ENCODE measurements at regions of chr2 and their contacts with region 1.

Region 1: DNA sequence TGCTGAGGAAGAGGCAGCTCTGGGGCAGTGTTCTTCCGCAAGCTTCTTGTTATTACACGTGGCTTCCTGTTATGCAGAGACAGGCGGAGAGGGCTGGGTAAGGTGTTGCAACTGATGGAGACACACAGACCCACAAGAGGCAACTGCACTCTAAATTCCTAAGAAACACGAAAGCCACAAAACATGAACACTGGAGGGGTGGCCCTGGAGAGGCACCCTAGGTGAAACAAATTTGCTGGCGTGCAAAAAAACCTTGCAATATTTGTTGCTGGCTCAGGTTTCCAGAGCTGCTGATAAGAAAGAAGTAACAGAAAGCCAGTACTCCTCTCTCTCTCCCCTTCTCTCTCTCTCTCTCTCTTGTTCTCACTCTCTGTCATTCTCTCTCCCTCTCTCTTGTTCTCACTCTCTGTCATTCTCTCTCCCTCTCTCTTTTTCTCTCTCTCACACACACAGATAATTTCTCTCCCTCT is 31.8 kb downstream of the ARHGAP25 start:
- DNase-seq: peak; percentile 77
- H3K4me3 Mint-ChIP-seq: peak overlapping the region; percentile 77
- H3K27ac Mint-ChIP-seq: peak overlapping the region; percentile 95
- H3K4me1 Mint-ChIP-seq: peaks cover 97% of the 10 kb centered on the region
- H3K27me3 Mint-ChIP-seq: no peaks in the 10 kb centered on the region

Region 2: DNA sequence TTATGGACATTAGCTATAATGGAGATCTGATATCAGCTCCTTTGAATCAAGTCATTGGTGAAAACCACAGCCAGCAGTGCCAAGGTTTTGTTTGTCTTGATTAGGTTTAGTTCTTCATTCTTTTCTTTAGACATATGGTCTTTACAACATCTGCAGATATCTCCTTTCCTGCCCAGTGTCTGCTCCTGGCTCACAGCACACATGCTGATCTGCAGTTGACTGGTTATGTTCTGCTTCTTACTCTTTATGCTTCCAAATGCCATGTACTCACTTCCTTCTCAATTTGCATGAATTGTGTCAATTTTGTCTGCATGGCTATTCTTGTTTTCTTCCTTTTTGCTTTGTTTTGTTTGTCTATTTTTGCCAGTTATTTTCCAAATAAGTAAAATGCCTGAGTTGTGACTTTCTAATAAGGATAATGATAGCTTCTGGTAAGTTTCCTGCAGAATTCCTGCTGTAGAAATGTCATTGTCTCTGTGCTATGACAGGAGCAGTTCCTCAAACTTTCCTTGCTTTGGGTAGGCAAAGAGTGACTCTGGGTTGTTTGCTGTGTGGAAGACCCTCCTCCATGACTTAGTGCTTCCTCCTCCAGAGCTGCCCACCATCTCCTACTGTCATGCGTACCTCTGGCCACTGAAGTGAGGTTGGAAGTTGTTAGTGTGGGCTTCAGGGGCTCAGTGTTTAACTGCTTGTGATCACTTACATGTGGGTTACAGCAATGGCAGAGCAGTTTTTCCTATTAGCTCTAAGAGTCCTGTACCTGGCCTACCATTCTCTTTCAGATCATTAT is 23.6 kb before region 1 on chr2:
- CTCF ChIA-PET with region 1: interaction called, 69 read pairs
- intact Hi-C with region 1: loop called (anchors 1 kb)
- DNase-seq: peak; percentile 45
- H3K4me3 Mint-ChIP-seq: no peak overlapping the region
- H3K27ac Mint-ChIP-seq: peak overlapping the region; percentile 91
- H3K4me1 Mint-ChIP-seq: peaks cover 93% of the 10 kb centered on the region
- H3K27me3 Mint-ChIP-seq: no peaks in the 10 kb centered on the region

Region 3: DNA sequence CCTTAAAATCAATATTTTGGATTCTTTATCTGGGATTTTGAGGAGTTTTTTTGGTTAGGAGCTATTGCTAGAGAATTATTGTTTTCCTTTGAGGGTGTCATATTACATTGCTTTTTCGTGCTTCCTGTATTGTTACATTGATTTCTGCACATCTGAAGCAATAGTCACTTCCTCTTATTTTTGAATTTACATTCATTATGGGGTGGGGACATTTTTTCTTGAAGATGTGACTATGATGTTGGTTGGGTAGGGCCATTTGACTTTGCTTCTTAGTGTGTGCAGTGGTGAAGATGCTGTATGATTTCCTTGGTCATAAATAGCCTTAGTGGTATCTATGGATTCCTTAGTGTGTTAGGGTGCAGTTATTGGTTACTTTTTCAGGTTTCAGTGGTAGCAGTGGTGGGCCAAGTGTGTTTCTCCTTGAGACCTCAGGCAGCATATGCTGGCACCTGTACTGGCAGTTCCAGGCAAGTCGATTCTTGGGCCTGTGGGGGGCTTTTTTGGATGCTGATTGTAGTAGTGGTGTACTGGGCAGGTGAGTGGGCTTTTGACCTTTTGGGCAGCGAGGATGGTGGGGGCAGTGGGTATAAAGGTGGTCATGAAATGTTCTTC is 30.0 kb after region 1 on chr2:
- CTCF ChIA-PET with region 1: interaction called, 3 read pairs
- intact Hi-C with region 1: loop called (anchors 1 kb)
- DNase-seq: peak; percentile 34
- H3K4me3 Mint-ChIP-seq: no peak overlapping the region
- H3K27ac Mint-ChIP-seq: peak overlapping the region; percentile 74
- H3K4me1 Mint-ChIP-seq: peaks cover 76% of the 10 kb centered on the region
- H3K27me3 Mint-ChIP-seq: no peaks in the 10 kb centered on the region

Region 4: DNA sequence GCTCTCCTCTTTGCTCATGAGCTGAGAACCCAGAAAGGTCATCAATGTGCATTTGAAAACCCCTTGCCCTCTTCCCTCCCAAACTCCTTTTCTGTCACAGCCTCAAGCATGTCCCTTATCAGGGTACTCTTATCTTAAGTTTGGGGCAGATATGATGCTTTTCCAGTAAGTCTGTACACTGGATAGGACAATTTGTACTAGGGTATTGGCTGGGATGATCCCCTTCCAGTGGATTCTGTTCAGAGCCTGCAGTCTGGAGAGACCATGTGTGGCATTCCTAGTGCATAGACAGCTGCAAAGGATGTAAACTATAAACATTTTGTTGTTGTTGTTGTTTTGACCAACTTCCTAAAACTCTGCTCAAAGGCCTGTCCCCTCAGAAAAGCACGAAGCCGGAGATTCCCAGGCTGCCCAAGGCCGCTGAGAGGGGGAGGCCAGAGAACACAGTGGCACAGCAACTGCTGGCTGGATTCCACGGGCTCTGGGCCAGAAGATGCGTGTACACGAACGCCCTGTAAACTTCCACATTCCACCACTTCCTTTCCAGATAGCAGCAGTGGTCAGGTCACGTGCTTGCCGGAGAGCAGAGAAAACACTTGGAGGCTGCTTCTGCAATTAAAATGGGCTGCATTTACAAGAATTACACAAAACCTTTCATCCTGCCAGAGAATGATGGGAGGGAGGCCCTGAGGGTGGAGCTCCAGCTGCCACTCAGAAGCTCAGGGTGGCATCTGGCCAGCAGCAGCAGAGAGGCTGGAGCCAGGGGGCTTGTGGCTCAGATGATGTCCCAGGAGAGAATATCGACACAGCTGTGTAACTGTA is 62.7 kb after region 1 on chr2:
- CTCF ChIA-PET with region 1: interaction called, 4 read pairs
- intact Hi-C with region 1: loop called (anchors 1 kb)
- DNase-seq: peak; percentile 85
- H3K4me3 Mint-ChIP-seq: peak overlapping the region; percentile 22
- H3K27ac Mint-ChIP-seq: peak overlapping the region; percentile 77
- H3K4me1 Mint-ChIP-seq: peaks cover 60% of the 10 kb centered on the region
- H3K27me3 Mint-ChIP-seq: no peaks in the 10 kb centered on the region

Region 5: GRCh38 chr2:68837164-68837860 is 70.9 kb after region 1 on chr2:
- CTCF ChIA-PET with region 1: interaction called, 8 read pairs
- intact Hi-C with region 1: loop called (anchors 1 kb)
- DNase-seq: peak; percentile 85
- H3K4me3 Mint-ChIP-seq: no peak overlapping the region
- H3K27ac Mint-ChIP-seq: peak overlapping the region; percentile 61
- H3K4me1 Mint-ChIP-seq: peaks cover 34% of the 10 kb centered on the region
- H3K27me3 Mint-ChIP-seq: no peaks in the 10 kb centered on the region

Region 6: DNA sequence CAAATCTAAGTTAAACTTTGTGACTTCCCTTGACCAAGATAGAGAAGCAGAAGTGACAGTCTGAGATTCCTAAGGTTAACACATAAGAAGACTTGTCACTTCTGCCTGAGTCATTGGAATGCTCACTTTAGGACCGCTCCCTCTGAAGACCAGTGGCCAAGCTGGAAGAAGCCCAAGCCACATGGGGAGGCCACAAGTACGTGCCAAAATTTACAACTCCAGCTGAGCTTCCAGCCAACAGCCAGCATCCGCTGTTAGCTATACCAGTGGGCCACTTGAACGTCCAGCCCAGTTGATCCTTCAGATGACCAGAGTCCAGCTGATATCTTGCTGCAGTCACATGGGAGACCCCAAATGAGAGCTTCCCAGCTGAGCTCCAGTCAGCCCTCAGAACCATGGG is 228.5 kb after region 1 on chr2:
- CTCF ChIA-PET with region 1: no interaction called
- intact Hi-C with region 1: no loop called
- DNase-seq: no peak
- H3K4me3 Mint-ChIP-seq: no peak overlapping the region
- H3K27ac Mint-ChIP-seq: no peak overlapping the region
- H3K4me1 Mint-ChIP-seq: no peaks in the 10 kb centered on the region
- H3K27me3 Mint-ChIP-seq: peaks cover 6% of the 10 kb centered on the region

Measured in activated naive CD4-positive, alpha-beta T cell treated with anti-CD3 and anti-CD28 coated beads for 36 hours (primary cell).